Common myeloid progenitor, CD34-positive (primary cell): ENCODE measurements at regions of chr7 and their contacts with region 1.

Region 1: DNA sequence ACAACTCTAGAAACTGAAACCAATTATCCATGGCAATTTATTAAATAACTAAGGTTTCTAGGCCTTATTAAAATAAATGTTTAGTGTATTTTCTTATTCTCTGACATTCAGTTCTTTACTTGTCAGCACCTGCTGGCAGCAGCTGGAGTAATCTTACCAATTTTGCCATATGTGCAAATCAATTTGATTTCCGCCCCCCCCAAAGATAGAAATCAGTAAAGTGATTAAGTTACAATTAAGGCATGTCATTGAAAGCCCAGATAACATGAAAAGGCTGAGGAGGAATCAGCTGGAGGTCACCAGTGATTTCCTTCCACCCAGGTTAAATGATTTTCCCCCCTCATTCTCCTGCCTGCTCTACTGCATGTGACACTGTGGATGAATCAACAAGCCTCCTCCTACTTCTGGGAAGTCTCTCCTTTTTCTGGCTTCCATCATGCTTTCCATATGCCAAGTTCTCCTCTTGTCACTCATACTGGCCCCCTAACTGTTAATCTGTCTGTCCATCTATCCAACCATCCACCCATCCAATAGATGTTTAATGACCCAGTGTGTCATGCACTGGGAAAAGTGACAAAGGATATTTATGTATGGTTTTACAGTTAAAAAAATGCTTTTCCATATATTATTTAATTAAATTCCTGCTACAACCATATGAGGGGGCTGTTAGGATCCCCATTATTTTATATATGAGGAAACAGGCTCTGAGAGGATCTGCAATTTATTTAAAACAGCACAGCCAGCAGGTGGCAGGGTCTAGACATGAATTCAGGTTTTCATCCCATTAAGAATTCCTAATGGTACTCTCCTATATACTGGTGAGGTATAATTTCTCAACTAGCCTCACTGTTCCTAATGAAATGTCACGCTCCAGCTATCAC is 116.5 kb downstream of the ATXN7L1 start:
- DNase-seq: peak; percentile 34 to 56 (median 54)
- H3K4me3 ChIP-seq: no peak overlapping the region
- H3K27ac ChIP-seq: no peak overlapping the region
- H3K4me1 ChIP-seq: peaks cover 0 to 6% (median 2%) of the 10 kb centered on the region in 4 experiments
- H3K27me3 ChIP-seq: peaks cover 0 to 3% (median 0%) of the 10 kb centered on the region in 5 experiments

Region 2: DNA sequence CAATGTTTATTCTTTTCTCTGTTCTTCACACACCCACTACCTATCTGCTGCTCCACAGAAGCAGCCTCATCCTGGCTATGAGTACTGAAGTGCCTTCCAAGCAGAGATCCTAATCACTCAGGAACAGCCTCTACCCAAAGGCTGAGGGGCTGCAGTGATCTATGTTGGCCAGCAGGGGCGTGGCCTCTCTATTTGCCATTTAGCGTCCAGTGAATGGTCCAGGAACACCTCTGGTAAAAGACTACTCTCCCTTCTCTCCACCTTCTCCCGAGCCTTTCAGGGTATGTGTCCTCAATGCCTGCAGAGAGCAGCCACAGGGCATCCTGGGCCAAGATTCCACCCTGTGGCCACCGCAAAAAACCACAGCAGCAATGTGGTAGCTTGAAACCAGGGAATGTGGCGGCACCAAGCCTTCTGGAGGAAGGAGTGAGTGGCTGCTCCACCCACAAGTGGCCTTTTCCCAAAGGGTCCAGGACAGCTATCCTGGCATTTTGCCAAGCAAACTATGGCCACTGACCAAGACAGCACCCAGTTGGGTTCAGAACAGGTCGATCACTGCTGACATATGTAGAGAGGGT is 281.3 kb after region 1 on chr7:
- CTCF ChIA-PET with region 1: interaction called, 53 read pairs
- POLR2A ChIA-PET with region 1: no interaction called
- DNase-seq: peak; percentile 54 to 69 (median 68)
- H3K4me3 ChIP-seq: no peak overlapping the region
- H3K27ac ChIP-seq: no peak overlapping the region
- H3K4me1 ChIP-seq: peaks cover 0 to 5% (median 4%) of the 10 kb centered on the region in 4 experiments
- H3K27me3 ChIP-seq: peaks cover 0 to 26% (median 16%) of the 10 kb centered on the region in 5 experiments